Mammary epithelial cell (primary cell): ENCODE measurements at regions of chr12 and their contacts with region 1.

Region 1: GRCh38 chr12:96219698-96220206 is 25.6 kb downstream of the ELK3 start:
- DNase-seq: peak; percentile 100
- H3K4me3 ChIP-seq: peak overlapping the region; percentile 30 to 41 (median 38)
- H3K27ac ChIP-seq: peak overlapping the region; percentile 100
- H3K4me1 ChIP-seq: peaks cover 57% of the 10 kb centered on the region
- H3K27me3 ChIP-seq: no peaks in the 10 kb centered on the region
- CTCF ChIP-seq: no peak

Region 2: GRCh38 chr12:96132819-96133218 is 86.9 kb before region 1 on chr12:
- CTCF ChIA-PET with region 1: no interaction called
- dilution Hi-C with region 1: no loop called
- in situ Hi-C with region 1: no loop called
- intact Hi-C with region 1: loop called (anchors 1 kb)
- DNase-seq: no peak
- H3K4me3 ChIP-seq: no peak overlapping the region
- H3K27ac ChIP-seq: no peak overlapping the region
- H3K4me1 ChIP-seq: peaks cover 6% of the 10 kb centered on the region
- H3K27me3 ChIP-seq: no peaks in the 10 kb centered on the region
- CTCF ChIP-seq: peak; percentile 11 to 31

Region 3: GRCh38 chr12:96194971-96195844 is 24.5 kb before region 1 on chr12:
- CTCF ChIA-PET with region 1: interaction called, 5 read pairs
- dilution Hi-C with region 1: no loop called
- in situ Hi-C with region 1: no loop called
- intact Hi-C with region 1: loop called (anchors 1 kb)
- DNase-seq: peak; percentile 84
- H3K4me3 ChIP-seq: peak overlapping the region; percentile 95 to 99 (median 98)
- H3K27ac ChIP-seq: peak overlapping the region; percentile 99
- H3K4me1 ChIP-seq: peaks cover 30% of the 10 kb centered on the region
- H3K27me3 ChIP-seq: no peaks in the 10 kb centered on the region
- CTCF ChIP-seq: no peak

Region 4: GRCh38 chr12:96263449-96263902 is 43.7 kb after region 1 on chr12:
- CTCF ChIA-PET with region 1: no interaction called
- dilution Hi-C with region 1: no loop called
- in situ Hi-C with region 1: no loop called
- intact Hi-C with region 1: no loop called
- DNase-seq: no peak
- H3K4me3 ChIP-seq: no peak overlapping the region
- H3K27ac ChIP-seq: peak overlapping the region; percentile 2
- H3K4me1 ChIP-seq: no peaks in the 10 kb centered on the region
- H3K27me3 ChIP-seq: no peaks in the 10 kb centered on the region
- CTCF ChIP-seq: no peak

Region 5: GRCh38 chr12:96399919-96400797 is 180.4 kb after region 1 on chr12 and contains the start of gene CDK17:
- CTCF ChIA-PET with region 1: no interaction called
- dilution Hi-C with region 1: no loop called
- in situ Hi-C with region 1: no loop called
- intact Hi-C with region 1: loop called (anchors 2 kb)
- DNase-seq: peak; percentile 80
- H3K4me3 ChIP-seq: peak within 1 kb of the TSS; percentile 66 to 83 (median 74)
- H3K27ac ChIP-seq: peak within 1 kb of the TSS; percentile 88
- H3K4me1 ChIP-seq: peaks cover 9% of the 10 kb centered on the region
- H3K27me3 ChIP-seq: no peaks in the 10 kb centered on the region
- CTCF ChIP-seq: peak in 1 of 2 donors; percentile 44
- total RNA-seq, gene CDK17: 42.5 to 64.2 TPM

Region 6: GRCh38 chr12:96501139-96501761 is 281.5 kb after region 1 on chr12:
- CTCF ChIA-PET with region 1: interaction called, 9 read pairs
- dilution Hi-C with region 1: no loop called
- in situ Hi-C with region 1: loop called in 1 of 2 experiments (anchors 25 kb)
- intact Hi-C with region 1: loop called (anchors 5 kb)
- DNase-seq: peak; percentile 88
- H3K4me3 ChIP-seq: no peak overlapping the region
- H3K27ac ChIP-seq: peak overlapping the region; percentile 93
- H3K4me1 ChIP-seq: peaks cover 31% of the 10 kb centered on the region
- H3K27me3 ChIP-seq: no peaks in the 10 kb centered on the region
- CTCF ChIP-seq: no peak